GM12878 (cell line): ENCODE measurements at regions of chr3 and their contacts with region 1.

Region 1: DNA sequence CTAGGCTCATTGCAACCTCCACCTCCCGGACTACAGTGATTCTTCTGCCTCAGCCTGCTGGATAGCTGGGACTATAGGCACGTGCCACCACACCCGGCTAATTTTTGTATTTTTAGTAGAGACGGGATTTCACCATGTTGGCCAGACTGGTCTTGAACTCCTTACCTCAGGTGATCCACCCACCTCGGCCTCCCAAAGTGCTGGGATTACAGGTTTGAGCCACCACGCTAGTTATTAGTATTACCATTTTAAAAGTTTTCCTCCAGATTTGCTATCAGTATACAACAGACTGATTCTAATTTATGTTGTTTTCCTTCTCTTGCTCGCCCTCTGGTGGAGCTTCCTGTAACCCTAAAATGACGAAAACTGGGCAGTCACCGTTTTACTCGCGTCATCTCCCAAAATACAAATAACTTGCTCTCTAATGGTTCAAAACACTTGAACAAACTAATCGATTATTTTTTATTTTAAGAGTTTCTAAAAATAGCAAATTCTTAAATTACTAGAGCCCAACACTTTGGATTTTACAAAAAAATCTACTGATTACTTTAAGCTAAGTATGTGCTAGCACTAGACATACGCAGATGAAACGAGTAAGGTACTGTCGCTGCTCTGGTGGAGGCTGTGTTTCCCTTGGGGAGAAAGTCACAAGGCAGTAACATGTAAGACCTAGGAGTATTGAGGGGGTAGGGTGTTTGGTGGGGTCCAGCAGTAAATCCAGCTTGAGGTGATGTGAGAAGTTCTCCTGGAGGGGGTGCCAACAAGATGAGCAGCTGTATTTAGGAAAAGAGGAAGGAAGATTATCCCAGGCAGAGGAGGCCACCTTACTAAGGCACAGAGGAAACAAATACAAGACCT is 203.3 kb downstream of the MBNL1 start:
- DNase-seq: peak; percentile 37
- ATAC-seq: peak; percentile 85
- H3K4me3 ChIP-seq: no peak overlapping the region; the same call in 1 of the 2 replicates
- H3K27ac ChIP-seq: no peak overlapping the region
- H3K4me1 ChIP-seq: no peaks in the 10 kb centered on the region
- H3K27me3 ChIP-seq: no peaks in the 10 kb centered on the region
- CTCF ChIP-seq: peak; percentile 61 to 65 (median 65)
- EP300 ChIP-seq: no peak
- POLR2A ChIP-seq: no peak
- RAD21 ChIP-seq: peak; percentile 65

Region 2: DNA sequence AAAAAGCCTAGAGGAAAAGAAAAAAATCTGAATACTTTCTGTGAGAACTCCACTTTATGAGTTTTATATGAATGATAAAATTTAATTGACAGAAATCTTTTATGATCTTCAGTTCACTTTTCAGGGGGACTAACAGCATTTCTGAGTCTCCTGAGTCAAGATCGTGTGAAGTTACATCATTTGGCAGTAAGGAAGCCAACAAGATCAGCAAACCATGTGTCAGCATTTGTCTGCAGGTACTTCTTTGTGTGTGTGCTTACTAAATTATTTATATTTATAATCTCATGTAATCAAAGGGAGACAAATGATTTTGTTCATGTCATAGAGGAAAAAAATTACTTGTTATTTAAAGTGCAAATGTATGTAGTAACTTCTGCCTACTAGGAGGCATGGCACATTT is 14.3 kb after region 1 on chr3:
- CTCF ChIA-PET with region 1: interaction called, 16 read pairs
- POLR2A ChIA-PET with region 1: interaction called, 3 read pairs
- RAD21 ChIA-PET with region 1: interaction called, 3 read pairs
- SMC1A ChIA-PET with region 1: interaction called, 29 read pairs
- in situ Hi-C with region 1: no loop called
- intact Hi-C with region 1: no loop called
- DNase-seq: no peak
- ATAC-seq: no peak
- H3K4me3 ChIP-seq: no peak overlapping the region
- H3K27ac ChIP-seq: no peak overlapping the region
- H3K4me1 ChIP-seq: peaks cover under 1% of the 10 kb centered on the region; the same call in 1 of the 2 replicates
- H3K27me3 ChIP-seq: no peaks in the 10 kb centered on the region
- CTCF ChIP-seq: no peak
- EP300 ChIP-seq: no peak
- POLR2A ChIP-seq: no peak
- RAD21 ChIP-seq: no peak

Region 3: DNA sequence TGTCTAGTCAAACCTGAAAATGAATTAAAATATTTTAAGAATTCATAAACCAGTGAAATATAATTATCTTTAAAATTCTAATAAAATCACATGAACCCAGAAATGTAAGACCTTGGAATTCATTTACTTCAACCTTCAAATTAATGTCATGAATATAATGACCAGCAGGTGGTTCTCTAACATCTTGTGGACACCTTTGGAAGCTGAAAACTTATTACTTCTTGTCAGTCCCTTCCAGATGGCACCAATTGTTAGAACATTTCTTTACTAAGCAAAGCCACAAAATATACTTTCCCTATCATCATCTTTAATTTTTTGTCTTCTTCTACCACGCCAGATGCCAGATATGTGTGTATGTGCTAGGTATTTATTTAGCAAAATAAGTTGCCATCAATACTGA is 36.7 kb after region 1 on chr3:
- CTCF ChIA-PET with region 1: interaction called, 379 read pairs
- POLR2A ChIA-PET with region 1: interaction called, 5 read pairs
- RAD21 ChIA-PET with region 1: interaction called, 13 read pairs
- SMC1A ChIA-PET with region 1: interaction called, 137 read pairs
- in situ Hi-C with region 1: no loop called
- intact Hi-C with region 1: no loop called
- DNase-seq: no peak
- ATAC-seq: peak; percentile 29; the same call in 2 of the 3 replicates
- H3K4me3 ChIP-seq: no peak overlapping the region
- H3K27ac ChIP-seq: no peak overlapping the region; the same call in 1 of the 2 replicates
- H3K4me1 ChIP-seq: peaks cover 26% of the 10 kb centered on the region
- H3K27me3 ChIP-seq: no peaks in the 10 kb centered on the region
- CTCF ChIP-seq: peak; percentile 31 to 36 (median 35); a peak in 4 of 6 replicates
- EP300 ChIP-seq: no peak
- POLR2A ChIP-seq: no peak
- RAD21 ChIP-seq: peak; percentile 69

Region 4: DNA sequence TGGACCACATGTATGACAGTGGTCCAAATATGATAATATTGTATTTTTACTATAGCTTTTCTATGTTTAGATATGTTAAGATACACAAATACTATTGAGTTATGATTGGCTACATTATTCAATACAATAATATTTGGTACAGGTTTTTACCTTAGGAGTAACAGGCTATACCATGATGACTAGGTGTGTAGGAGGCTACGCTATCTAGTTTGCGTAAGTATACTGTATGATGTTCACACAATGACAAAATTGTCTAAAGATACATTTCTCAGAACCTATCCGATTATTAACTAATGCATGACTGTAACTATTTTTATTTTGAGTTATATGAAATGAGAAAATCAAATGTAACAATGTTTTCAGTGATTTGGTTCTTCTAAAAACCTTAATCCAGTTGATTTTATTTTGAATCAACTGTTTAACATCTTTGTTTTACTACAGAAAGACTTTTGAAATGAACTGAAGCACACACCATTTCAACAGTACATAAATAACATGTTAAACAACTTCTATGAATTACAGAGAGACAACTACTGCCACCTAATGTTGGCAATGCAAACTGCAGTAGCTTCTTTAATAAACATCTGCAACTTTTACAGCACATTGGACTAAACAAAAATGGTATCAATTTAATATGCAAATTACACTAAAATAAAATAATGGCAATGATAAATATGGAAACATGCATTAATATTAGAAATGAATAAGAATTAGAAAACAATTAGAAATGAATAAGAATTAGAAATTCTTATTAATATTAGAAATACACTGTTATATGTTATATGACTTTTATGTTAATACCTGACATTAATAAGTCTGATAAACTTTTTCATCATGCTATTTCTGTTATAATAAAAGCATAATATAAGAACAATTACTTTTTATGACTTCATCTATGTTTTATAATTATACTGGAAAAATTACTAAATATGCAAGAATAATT is 52.4 kb after region 1 on chr3:
- CTCF ChIA-PET with region 1: interaction called, 379 read pairs
- POLR2A ChIA-PET with region 1: no interaction called
- RAD21 ChIA-PET with region 1: interaction called, 84 read pairs
- SMC1A ChIA-PET with region 1: interaction called, 165 read pairs
- in situ Hi-C with region 1: loop called (anchors 10 kb)
- intact Hi-C with region 1: loop called (anchors 1 kb)
- DNase-seq: no peak
- ATAC-seq: peak; percentile 74
- H3K4me3 ChIP-seq: no peak overlapping the region
- H3K27ac ChIP-seq: no peak overlapping the region
- H3K4me1 ChIP-seq: no peaks in the 10 kb centered on the region
- H3K27me3 ChIP-seq: no peaks in the 10 kb centered on the region
- CTCF ChIP-seq: peak; percentile 69 to 80 (median 79); a peak in 5 of 6 replicates
- EP300 ChIP-seq: no peak
- POLR2A ChIP-seq: no peak
- RAD21 ChIP-seq: peak; percentile 90

Region 5: GRCh38 chr3:152834776-152835600 is 362.9 kb after region 1 on chr3 and contains the start of gene P2RY1:
- CTCF ChIA-PET with region 1: no interaction called
- POLR2A ChIA-PET with region 1: no interaction called
- RAD21 ChIA-PET with region 1: no interaction called
- SMC1A ChIA-PET with region 1: no interaction called
- in situ Hi-C with region 1: no loop called
- intact Hi-C with region 1: loop called (anchors 10 kb)
- DNase-seq: peak; percentile 57
- ATAC-seq: peak; percentile 88
- H3K4me3 ChIP-seq: peak within 1 kb of the TSS; percentile 65
- H3K27ac ChIP-seq: peak within 1 kb of the TSS; percentile 41
- H3K4me1 ChIP-seq: no peaks in the 10 kb centered on the region
- H3K27me3 ChIP-seq: no peaks in the 10 kb centered on the region; a peak in 1 of 4 replicates
- CTCF ChIP-seq: peak in 2 of 3 experiments; percentile 41 to 46; a peak in 4 of 6 replicates
- EP300 ChIP-seq: no peak
- POLR2A ChIP-seq: peak; percentile 85
- RAD21 ChIP-seq: peak; percentile 45
- polyA plus RNA-seq, gene P2RY1: 0.58 to 0.66 TPM

Region 6: GRCh38 chr3:152961323-152961722 is 489.3 kb after region 1 on chr3:
- CTCF ChIA-PET with region 1: no interaction called
- POLR2A ChIA-PET with region 1: no interaction called
- RAD21 ChIA-PET with region 1: no interaction called
- SMC1A ChIA-PET with region 1: no interaction called
- in situ Hi-C with region 1: loop called (anchors 10 kb)
- intact Hi-C with region 1: loop called (anchors 2 kb)
- DNase-seq: peak; percentile 5
- ATAC-seq: peak; percentile 67
- H3K4me3 ChIP-seq: no peak overlapping the region
- H3K27ac ChIP-seq: no peak overlapping the region
- H3K4me1 ChIP-seq: no peaks in the 10 kb centered on the region
- H3K27me3 ChIP-seq: no peaks in the 10 kb centered on the region
- CTCF ChIP-seq: peak; percentile 16 to 36 (median 34); a peak in 4 of 6 replicates
- EP300 ChIP-seq: no peak
- POLR2A ChIP-seq: no peak
- RAD21 ChIP-seq: peak; percentile 71